Activated CD4-positive, alpha-beta T cell treated with anti-CD3 and anti-CD28 coated beads for 36 hours (primary cell): ENCODE measurements at regions of chr11 and their contacts with region 1.

Region 1: GRCh38 chr11:1852877-1853276 is at the start of gene LSP1:
- DNase-seq: peak; percentile 93
- ATAC-seq: peak; percentile 60
- H3K4me3 Mint-ChIP-seq: peak within 1 kb of the TSS; percentile 97
- H3K27ac Mint-ChIP-seq: peak within 1 kb of the TSS; percentile 98
- H3K4me1 Mint-ChIP-seq: peaks cover 66% of the 10 kb centered on the region
- H3K27me3 Mint-ChIP-seq: no peaks in the 10 kb centered on the region
- total RNA-seq, gene LSP1: 193 to 227 TPM

Region 2: GRCh38 chr11:1422481-1422880 is 430.4 kb before region 1 on chr11:
- CTCF ChIA-PET with region 1: no interaction called
- POLR2A ChIA-PET with region 1: no interaction called
- intact Hi-C with region 1: no loop called
- DNase-seq: no peak
- ATAC-seq: no peak
- H3K4me3 Mint-ChIP-seq: no peak overlapping the region
- H3K27ac Mint-ChIP-seq: no peak overlapping the region
- H3K4me1 Mint-ChIP-seq: no peaks in the 10 kb centered on the region
- H3K27me3 Mint-ChIP-seq: no peaks in the 10 kb centered on the region

Region 3: GRCh38 chr11:1882519-1883238 is 29.8 kb after region 1 on chr11:
- CTCF ChIA-PET with region 1: interaction called, 13 read pairs
- POLR2A ChIA-PET with region 1: no interaction called
- intact Hi-C with region 1: loop called in 1 of 2 experiments (anchors 5 kb)
- DNase-seq: peak; percentile 92
- ATAC-seq: peak; percentile 93
- H3K4me3 Mint-ChIP-seq: no peak overlapping the region
- H3K27ac Mint-ChIP-seq: no peak overlapping the region
- H3K4me1 Mint-ChIP-seq: peaks cover 2% of the 10 kb centered on the region
- H3K27me3 Mint-ChIP-seq: no peaks in the 10 kb centered on the region

Region 4: DNA sequence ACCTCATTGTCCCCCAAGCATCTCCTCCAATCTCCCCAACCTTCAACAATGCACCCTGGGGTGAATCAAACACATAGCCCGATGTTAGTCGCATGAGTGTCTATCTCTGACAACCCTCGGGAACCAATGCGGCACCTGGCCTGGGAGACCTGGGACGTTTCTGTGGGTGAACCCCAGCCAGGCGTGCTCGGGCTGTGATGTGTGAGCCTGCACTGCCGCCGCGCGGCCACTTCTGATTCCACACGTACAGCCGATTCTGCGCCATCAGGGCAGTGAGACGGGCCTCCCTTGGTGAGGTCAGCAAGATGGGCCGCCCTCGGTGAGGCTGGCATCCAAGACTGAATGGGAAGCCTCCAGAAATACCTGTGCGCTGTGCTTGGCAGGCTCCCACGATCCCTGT is 149.9 kb after region 1 on chr11:
- CTCF ChIA-PET with region 1: interaction called, 12 read pairs
- POLR2A ChIA-PET with region 1: no interaction called
- intact Hi-C with region 1: no loop called
- DNase-seq: no peak
- ATAC-seq: peak; percentile 63
- H3K4me3 Mint-ChIP-seq: no peak overlapping the region
- H3K27ac Mint-ChIP-seq: no peak overlapping the region
- H3K4me1 Mint-ChIP-seq: no peaks in the 10 kb centered on the region
- H3K27me3 Mint-ChIP-seq: no peaks in the 10 kb centered on the region

Region 5: GRCh38 chr11:2142762-2143202 is 289.9 kb after region 1 on chr11:
- CTCF ChIA-PET with region 1: no interaction called
- POLR2A ChIA-PET with region 1: no interaction called
- intact Hi-C with region 1: loop called in 1 of 2 experiments (anchors 1 kb)
- DNase-seq: peak; percentile 71
- ATAC-seq: peak; percentile 96
- H3K4me3 Mint-ChIP-seq: peak overlapping the region; percentile 55
- H3K27ac Mint-ChIP-seq: no peak overlapping the region
- H3K4me1 Mint-ChIP-seq: peaks cover 31% of the 10 kb centered on the region
- H3K27me3 Mint-ChIP-seq: peaks cover 58% of the 10 kb centered on the region